CD14-positive monocyte (primary cell): ENCODE measurements at regions of chr6 and their contacts with region 1.

Region 1: DNA sequence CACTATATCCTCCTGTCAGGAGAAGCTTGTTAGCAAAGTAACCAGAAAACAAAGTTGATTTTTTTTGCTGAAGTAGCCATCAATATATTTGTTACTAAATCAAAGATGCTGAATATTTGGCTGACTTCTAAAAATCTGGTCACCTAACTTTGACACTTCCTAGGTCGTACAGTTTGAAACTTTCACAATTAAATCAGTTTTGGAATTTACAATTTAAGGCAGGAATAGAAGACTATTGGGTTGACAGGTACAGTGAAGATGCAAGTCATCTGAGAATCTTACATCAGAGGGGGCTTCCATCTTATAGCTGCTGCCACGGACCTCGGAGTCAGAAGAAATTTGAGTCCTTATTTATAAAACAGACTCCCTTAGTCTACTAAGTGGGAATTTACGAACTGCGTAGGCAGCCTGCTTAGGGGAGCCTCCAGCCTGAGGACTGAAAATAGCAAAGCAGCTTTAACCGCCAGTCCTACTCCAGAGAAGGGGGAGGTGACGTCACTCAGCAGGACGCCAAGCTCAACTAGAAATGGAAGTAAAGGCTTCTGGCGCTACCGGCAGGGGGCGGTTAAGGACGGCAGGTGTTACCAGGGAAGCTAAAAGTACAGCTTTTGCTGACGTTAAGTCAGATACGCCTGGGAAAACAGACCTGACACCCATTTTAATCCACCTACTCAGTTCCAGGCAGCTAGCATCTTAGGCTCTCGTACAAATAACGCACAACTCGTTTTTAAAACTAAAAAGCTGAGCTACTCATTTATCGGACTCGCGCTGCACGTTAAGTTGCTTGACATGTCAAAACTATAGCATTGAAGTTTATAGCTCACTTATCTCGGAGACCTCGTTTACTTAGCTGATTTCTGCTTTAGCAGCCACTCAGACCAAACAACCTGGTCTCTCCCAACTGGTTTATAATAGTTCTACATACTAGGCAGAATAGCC is 61.1 kb upstream of the HFE start:
- DNase-seq: peak; percentile 81 to 93 (median 87)
- H3K4me3 ChIP-seq: peak overlapping the region; percentile 60 to 90 (median 78)
- H3K4me3 Mint-ChIP-seq: peak overlapping the region; percentile 98
- H3K27ac ChIP-seq: peak overlapping the region; percentile 79 to 86
- H3K27ac Mint-ChIP-seq: peak overlapping the region; percentile 93 to 98 (median 95)
- H3K4me1 ChIP-seq: peaks cover 35 to 47% of the 10 kb centered on the region in 2 donors
- H3K4me1 Mint-ChIP-seq: peaks cover 33% of the 10 kb centered on the region
- H3K27me3 ChIP-seq: no peaks in the 10 kb centered on the region
- H3K27me3 Mint-ChIP-seq: peaks cover 0 to 2% (median 0%) of the 10 kb centered on the region in 3 donors
- CTCF ChIP-seq: peak; percentile 96

Region 2: DNA sequence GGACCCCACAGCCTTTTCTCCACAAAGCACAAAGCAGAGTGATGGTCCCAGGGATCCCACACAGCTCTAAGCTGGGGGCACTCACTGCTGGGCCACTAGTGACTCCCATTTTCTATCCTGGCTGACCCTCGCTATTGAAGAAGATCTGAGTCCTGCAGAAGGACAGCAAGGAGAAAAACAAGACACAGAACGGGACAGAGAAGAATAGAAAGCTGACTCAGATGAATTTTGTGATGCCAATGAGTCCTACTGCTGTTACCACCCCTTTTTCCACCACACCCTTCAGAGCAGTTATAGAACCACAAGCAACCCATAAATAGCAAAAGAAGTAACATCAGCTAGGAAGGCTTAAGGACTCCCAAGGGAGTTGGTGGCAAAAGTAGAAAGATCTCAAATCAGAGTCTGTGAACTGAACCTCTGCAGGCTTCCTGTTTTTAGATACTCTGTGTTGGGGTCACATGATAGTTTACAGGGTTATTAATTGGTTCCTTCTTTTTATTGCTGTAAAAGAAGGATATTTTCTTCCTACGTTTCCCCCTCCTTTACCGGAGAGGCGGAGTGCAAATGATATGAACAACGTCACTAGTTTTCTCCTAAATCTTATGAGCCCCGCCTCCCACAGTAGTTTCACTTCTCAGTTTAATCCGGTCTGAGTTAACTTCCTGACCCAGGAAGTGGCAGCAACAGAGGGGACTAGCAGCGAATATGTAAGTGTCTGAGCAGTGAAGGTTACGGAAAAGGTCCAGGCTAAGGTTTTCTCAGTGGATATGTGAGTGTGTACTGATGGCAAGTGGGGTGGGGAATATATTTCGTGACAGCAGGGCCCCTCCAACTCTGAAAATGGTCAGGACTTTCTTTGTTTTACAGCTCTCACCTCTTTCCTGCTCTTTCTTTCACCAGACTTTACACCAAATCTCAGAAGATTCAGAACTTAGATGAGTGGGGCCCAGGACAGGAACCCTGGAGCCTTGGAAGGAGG is 63.7 kb before region 1 on chr6 and contains the start of gene TRIM38:
- intact Hi-C with region 1: loop called in 1 of 2 experiments (anchors 10 kb)
- DNase-seq: peak; percentile 95 to 99 (median 97)
- H3K4me3 ChIP-seq: peak within 1 kb of the TSS; percentile 67 to 100 (median 100)
- H3K4me3 Mint-ChIP-seq: peak within 1 kb of the TSS; percentile 96 to 99
- H3K27ac ChIP-seq: peak within 1 kb of the TSS; percentile 93 to 98
- H3K27ac Mint-ChIP-seq: peak within 1 kb of the TSS; percentile 98 to 100 (median 99)
- H3K4me1 ChIP-seq: peaks cover 46 to 68% of the 10 kb centered on the region in 2 donors
- H3K4me1 Mint-ChIP-seq: peaks cover 60% of the 10 kb centered on the region
- H3K27me3 ChIP-seq: no peaks in the 10 kb centered on the region
- H3K27me3 Mint-ChIP-seq: peaks cover 0 to 4% (median 2%) of the 10 kb centered on the region in 3 donors
- CTCF ChIP-seq: no peak
- polyA plus RNA-seq, gene TRIM38: 4.1 to 23.2 (median 8.0) TPM

Region 3: DNA sequence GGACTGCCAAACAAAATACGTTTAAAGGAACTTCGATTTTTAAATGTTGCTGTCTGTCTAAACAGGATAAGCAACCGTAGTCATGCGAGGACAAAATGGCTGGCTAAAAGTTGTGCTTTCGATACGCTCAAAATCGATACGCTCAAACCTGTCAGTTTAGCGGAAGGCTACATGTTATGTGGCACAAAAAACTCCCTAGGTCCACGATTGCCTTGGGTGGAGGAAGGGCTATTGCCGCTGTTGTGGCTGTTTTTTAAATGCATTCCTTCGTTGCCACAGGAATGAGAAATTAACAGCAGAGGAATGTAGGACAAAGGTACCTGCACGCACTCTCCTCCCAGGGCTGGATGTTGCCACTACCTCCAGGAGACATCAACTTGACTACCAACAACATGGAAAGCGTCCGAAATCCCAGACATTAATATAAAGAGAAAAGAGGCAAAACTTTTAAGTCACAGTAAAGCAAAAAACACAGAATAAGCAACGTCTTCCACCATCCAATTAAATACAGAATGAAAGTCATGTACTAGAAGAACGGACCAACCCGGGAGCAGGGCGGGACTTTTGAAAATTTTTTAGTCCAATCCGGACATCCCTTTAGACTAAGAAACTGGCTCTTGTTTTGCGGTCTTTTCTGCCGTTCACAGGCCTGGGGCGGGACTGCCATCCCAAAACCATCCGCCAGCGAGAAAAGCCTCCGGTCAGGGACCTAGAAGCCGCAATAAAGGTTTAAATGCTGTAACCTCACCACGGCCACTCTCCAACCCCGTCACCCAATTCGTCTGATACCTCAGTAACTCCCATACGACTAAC is 28.9 kb after region 1 on chr6:
- intact Hi-C with region 1: loop called in 1 of 2 experiments (anchors 5 kb)
- DNase-seq: peak; percentile 80 to 92 (median 81)
- H3K4me3 ChIP-seq: peak overlapping the region; percentile 71 to 100 (median 93)
- H3K4me3 Mint-ChIP-seq: peak overlapping the region; percentile 99 to 100
- H3K27ac ChIP-seq: peak overlapping the region; percentile 84 to 86
- H3K27ac Mint-ChIP-seq: peak overlapping the region; percentile 87 to 95 (median 94)
- H3K4me1 ChIP-seq: peaks cover 21 to 32% of the 10 kb centered on the region in 2 donors
- H3K4me1 Mint-ChIP-seq: peaks cover 27% of the 10 kb centered on the region
- H3K27me3 ChIP-seq: no peaks in the 10 kb centered on the region
- H3K27me3 Mint-ChIP-seq: peaks cover 0 to 1% (median 0%) of the 10 kb centered on the region in 3 donors
- CTCF ChIP-seq: no peak